GM12878 (cell line): ENCODE measurements at regions of chr3 and their contacts with region 1.

Region 1: DNA sequence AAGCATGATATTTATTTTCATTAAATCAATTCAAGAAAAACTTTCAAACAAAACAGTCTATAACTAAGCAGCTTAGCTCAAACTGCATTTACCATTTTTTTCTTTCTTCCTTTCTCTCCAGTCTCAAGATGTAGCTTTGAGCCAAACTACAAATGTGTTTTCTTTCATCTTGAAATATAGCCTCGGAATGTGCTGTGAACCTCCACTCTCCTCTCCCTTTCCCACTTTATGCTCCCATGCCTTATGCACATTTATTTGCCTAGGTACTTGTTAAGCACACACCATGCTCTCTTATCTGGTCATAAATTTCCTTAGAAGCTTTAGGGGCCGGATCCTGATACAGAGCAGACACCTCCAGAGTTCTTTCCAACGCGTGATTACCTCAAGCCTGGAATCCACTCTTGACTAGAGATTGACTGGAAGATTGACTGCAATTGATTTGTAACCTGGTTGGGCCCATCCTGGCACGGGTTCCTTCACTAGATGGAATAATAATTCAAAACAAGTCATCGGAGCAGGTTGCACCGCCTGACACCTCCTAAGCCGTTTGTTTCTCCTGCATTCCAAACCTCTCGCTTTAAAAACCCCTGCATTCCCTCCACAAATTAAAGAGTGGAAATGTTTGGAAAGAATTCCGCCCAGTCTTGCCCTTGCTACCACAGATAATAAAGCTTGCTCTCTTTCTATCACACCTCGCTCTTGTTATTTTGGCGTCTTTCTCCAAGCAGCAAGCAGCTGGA is 344.7 kb downstream of the CHL1 start:
- DNase-seq: no peak
- ATAC-seq: no peak
- H3K4me3 ChIP-seq: no peak overlapping the region
- H3K27ac ChIP-seq: no peak overlapping the region
- H3K4me1 ChIP-seq: no peaks in the 10 kb centered on the region
- H3K27me3 ChIP-seq: no peaks in the 10 kb centered on the region
- CTCF ChIP-seq: no peak
- EP300 ChIP-seq: no peak
- POLR2A ChIP-seq: no peak
- RAD21 ChIP-seq: no peak

Region 2: GRCh38 chr3:481680-482079 is 59.6 kb before region 1 on chr3:
- CTCF ChIA-PET with region 1: no interaction called
- POLR2A ChIA-PET with region 1: no interaction called
- RAD21 ChIA-PET with region 1: no interaction called
- SMC1A ChIA-PET with region 1: no interaction called
- in situ Hi-C with region 1: no loop called
- intact Hi-C with region 1: no loop called
- DNase-seq: no peak
- ATAC-seq: peak; percentile 83
- H3K4me3 ChIP-seq: no peak overlapping the region
- H3K27ac ChIP-seq: no peak overlapping the region
- H3K4me1 ChIP-seq: no peaks in the 10 kb centered on the region
- H3K27me3 ChIP-seq: no peaks in the 10 kb centered on the region
- CTCF ChIP-seq: peak; percentile 21 to 41 (median 37); a peak in 4 of 6 replicates
- EP300 ChIP-seq: no peak
- POLR2A ChIP-seq: no peak
- RAD21 ChIP-seq: peak; percentile 35; the same call in 1 of the 2 replicates

Region 3: DNA sequence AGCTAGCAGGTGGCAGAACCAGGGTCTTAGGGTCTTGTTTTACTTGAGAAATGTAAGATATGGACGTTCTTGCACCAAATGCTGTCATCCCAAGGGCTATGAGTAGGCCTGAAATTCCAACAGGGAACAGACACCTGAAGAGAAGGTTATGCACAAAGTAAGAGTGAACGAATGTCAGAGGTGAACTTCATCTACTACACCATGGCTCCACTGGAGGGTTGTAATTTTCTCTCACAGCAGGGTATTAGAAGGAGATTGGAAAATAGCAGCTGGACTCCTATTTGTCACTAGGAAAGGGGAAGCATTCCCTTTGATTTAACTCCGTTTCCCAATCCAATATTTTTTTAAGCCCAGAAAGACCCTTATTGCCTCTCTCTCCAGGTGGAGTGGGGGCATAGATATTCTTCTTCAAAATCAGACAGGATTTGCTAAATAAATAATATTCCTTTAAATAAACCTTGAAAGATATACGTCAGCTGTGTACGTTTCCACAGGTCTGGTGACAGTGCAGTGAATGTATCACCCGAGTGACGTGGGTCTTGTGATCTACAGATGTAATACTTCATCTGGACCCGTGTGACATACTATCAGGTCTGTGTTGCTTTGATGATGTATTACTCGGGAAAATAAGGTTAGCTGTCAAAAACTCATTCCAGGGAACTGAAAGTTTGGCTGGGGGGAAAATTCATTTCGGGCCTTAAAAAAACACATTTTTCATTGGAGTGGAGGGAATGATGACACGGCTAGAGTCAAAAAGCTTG is 42.1 kb before region 1 on chr3:
- CTCF ChIA-PET with region 1: no interaction called
- POLR2A ChIA-PET with region 1: no interaction called
- RAD21 ChIA-PET with region 1: no interaction called
- SMC1A ChIA-PET with region 1: no interaction called
- in situ Hi-C with region 1: no loop called
- intact Hi-C with region 1: loop called (anchors 5 kb)
- DNase-seq: no peak
- ATAC-seq: no peak
- H3K4me3 ChIP-seq: no peak overlapping the region
- H3K27ac ChIP-seq: no peak overlapping the region
- H3K4me1 ChIP-seq: no peaks in the 10 kb centered on the region
- H3K27me3 ChIP-seq: no peaks in the 10 kb centered on the region
- CTCF ChIP-seq: no peak
- EP300 ChIP-seq: no peak
- POLR2A ChIP-seq: no peak
- RAD21 ChIP-seq: no peak